HepG2 (cell line): ENCODE measurements at regions of chr13 and their contacts with region 1.

Region 1: DNA sequence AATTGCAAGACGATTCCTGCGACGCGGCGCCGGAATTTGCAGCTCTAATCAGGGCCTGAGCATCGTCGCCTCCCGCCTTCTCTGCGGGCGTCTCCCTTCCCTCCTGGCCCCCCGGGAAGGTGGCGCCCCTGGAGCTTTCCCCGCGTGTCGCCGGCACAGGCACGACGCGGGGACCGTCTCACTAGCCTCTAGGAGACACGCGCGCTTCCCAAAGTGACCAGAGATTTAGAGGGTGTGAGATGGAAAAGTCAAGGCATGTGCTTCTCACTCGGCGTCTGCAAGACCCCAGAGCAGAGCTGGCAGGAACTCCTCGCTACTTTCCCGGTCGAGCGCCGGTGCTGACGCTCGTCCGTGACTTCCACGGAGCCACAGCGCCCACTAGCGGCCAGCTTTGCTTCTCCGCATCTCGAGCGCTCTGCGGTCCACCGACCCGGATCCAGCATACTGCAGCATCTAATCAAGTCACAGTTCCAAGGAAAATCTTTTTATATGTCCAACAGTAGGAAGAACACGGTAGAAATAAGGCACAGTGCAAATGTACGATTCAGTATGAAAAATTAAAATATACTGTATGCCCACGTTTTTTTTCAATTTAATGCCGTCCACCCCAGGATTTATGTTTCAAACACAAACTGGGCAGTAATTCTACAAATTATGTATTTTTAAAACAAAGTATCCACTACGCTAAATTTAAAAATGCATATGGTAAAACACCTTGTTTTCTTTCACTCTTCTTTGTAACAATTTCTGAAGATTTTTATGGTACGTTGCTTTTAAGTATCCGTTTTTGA is 977 bp upstream of the EFNB2 start:
- DNase-seq: peak; percentile 47
- ATAC-seq: peak; percentile 74
- H3K4me3 ChIP-seq: peak overlapping the region; percentile 38 to 75 (median 51)
- H3K27ac ChIP-seq: no peak overlapping the region
- H3K4me1 ChIP-seq: peaks cover 15% of the 10 kb centered on the region
- H3K27me3 ChIP-seq: peaks cover 2 to 16% of the 10 kb centered on the region in 2 experiments; a peak in 2 of 5 replicates
- CTCF ChIP-seq: peak; percentile 95
- EP300 ChIP-seq: no peak
- POLR2A ChIP-seq: no peak
- RAD21 ChIP-seq: peak; percentile 86

Region 2: DNA sequence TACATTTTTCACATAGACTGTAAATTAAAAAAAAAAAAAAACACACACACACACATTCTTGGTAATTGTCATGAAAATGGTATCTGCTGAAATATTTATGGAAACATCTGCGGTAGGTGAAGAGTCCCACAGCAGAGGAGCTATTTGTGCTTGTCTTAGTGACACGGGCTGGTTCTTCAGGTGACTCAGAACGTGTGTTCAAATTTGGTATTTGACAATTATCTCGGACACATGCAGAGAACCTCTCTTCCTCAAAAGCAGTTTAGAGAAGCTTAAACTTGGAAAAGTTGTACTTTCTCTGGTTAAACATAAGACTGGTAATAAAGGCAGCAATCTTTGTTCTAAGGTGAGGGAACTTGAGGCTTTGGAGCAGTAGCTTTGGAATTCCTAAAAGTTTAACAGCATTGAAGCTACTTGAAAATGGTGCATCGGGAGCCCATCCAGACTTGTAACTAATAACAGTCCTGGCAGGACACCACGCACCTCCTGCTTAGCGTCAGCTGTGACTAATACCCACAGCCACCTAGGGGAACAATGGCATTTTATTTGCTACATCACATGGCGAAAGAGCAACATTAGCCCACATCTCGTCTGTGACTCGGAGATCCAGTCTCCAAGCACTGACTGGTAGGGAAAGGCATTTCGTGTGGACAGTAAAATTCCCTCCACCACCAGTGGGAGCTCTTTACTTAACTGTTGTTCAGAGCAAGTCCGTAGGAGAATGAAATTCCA is 1965.1 kb before region 1 on chr13:
- CTCF ChIA-PET with region 1: no interaction called
- POLR2A ChIA-PET with region 1: no interaction called
- in situ Hi-C with region 1: loop called (anchors 25 kb)
- intact Hi-C with region 1: loop called (anchors 10 kb)
- DNase-seq: peak; percentile 16
- ATAC-seq: peak; percentile 89
- H3K4me3 ChIP-seq: no peak overlapping the region
- H3K27ac ChIP-seq: no peak overlapping the region
- H3K4me1 ChIP-seq: no peaks in the 10 kb centered on the region
- H3K27me3 ChIP-seq: no peaks in the 10 kb centered on the region
- CTCF ChIP-seq: peak; percentile 59
- EP300 ChIP-seq: no peak
- POLR2A ChIP-seq: no peak
- RAD21 ChIP-seq: no peak

Region 3: GRCh38 chr13:106083620-106084350 is 452.7 kb before region 1 on chr13:
- CTCF ChIA-PET with region 1: no interaction called
- POLR2A ChIA-PET with region 1: no interaction called
- in situ Hi-C with region 1: no loop called
- intact Hi-C with region 1: loop called (anchors 10 kb)
- DNase-seq: peak; percentile 6
- ATAC-seq: peak; percentile 51
- H3K4me3 ChIP-seq: no peak overlapping the region
- H3K27ac ChIP-seq: no peak overlapping the region
- H3K4me1 ChIP-seq: no peaks in the 10 kb centered on the region
- H3K27me3 ChIP-seq: no peaks in the 10 kb centered on the region
- CTCF ChIP-seq: peak; percentile 28; the same call in 1 of the 2 replicates
- EP300 ChIP-seq: no peak
- POLR2A ChIP-seq: no peak
- RAD21 ChIP-seq: no peak

Region 4: GRCh38 chr13:106493533-106494220 is 42.8 kb before region 1 on chr13:
- CTCF ChIA-PET with region 1: no interaction called
- POLR2A ChIA-PET with region 1: no interaction called
- in situ Hi-C with region 1: no loop called
- intact Hi-C with region 1: no loop called
- DNase-seq: no peak
- ATAC-seq: no peak
- H3K4me3 ChIP-seq: no peak overlapping the region
- H3K27ac ChIP-seq: no peak overlapping the region
- H3K4me1 ChIP-seq: no peaks in the 10 kb centered on the region
- H3K27me3 ChIP-seq: no peaks in the 10 kb centered on the region
- CTCF ChIP-seq: no peak
- EP300 ChIP-seq: no peak
- POLR2A ChIP-seq: no peak
- RAD21 ChIP-seq: no peak

Region 5: DNA sequence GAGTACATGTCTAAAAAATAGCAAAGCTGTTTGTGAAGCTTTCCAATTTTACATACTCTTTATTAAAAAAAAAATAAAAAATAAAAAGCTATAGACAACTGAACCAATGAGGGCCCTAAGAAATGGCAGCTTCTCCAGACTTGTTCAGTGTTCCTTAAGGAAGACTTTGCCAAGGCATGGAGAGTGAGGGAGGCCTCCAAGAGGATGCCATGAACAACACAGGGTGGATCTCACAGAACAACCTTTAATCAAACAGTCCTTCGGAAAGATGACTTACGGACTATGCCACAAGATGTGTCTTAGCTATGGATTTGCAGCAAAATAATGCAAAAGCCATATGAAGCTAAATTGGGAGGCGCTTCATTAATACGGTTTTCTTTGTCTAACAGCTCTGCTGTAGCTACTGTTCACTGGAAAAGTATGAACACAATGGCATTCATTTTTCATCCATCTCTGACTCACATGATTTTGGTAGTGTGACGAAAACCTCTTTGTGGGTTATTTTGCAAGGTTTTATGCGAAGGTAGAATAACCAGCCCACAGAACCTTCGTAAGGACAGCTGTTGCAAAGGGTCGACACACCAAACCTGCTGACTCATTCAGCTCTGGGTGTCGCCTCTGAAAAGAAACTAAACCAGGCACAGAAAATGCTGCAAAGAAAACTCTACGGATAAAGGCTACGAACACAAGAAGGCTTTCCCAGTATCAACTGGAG is 28.7 kb before region 1 on chr13:
- CTCF ChIA-PET with region 1: no interaction called
- POLR2A ChIA-PET with region 1: no interaction called
- in situ Hi-C with region 1: no loop called
- intact Hi-C with region 1: no loop called
- DNase-seq: peak; percentile 1
- ATAC-seq: no peak
- H3K4me3 ChIP-seq: no peak overlapping the region
- H3K27ac ChIP-seq: no peak overlapping the region
- H3K4me1 ChIP-seq: no peaks in the 10 kb centered on the region
- H3K27me3 ChIP-seq: no peaks in the 10 kb centered on the region
- CTCF ChIP-seq: no peak
- EP300 ChIP-seq: no peak
- POLR2A ChIP-seq: no peak
- RAD21 ChIP-seq: no peak

Region 6: GRCh38 chr13:106917673-106918556 is 381.5 kb after region 1 on chr13:
- CTCF ChIA-PET with region 1: no interaction called
- POLR2A ChIA-PET with region 1: no interaction called
- in situ Hi-C with region 1: no loop called
- intact Hi-C with region 1: loop called (anchors 10 kb)
- DNase-seq: no peak
- ATAC-seq: peak; percentile 99
- H3K4me3 ChIP-seq: peak overlapping the region; percentile 53 to 75 (median 62); a peak in 5 of 6 replicates
- H3K27ac ChIP-seq: no peak overlapping the region
- H3K4me1 ChIP-seq: peaks cover 6% of the 10 kb centered on the region; the same call in 1 of the 2 replicates
- H3K27me3 ChIP-seq: peaks cover 0 to 6% of the 10 kb centered on the region in 2 experiments; a peak in 2 of 5 replicates
- CTCF ChIP-seq: peak; percentile 88
- EP300 ChIP-seq: no peak
- POLR2A ChIP-seq: no peak
- RAD21 ChIP-seq: peak; percentile 61

Region 7: DNA sequence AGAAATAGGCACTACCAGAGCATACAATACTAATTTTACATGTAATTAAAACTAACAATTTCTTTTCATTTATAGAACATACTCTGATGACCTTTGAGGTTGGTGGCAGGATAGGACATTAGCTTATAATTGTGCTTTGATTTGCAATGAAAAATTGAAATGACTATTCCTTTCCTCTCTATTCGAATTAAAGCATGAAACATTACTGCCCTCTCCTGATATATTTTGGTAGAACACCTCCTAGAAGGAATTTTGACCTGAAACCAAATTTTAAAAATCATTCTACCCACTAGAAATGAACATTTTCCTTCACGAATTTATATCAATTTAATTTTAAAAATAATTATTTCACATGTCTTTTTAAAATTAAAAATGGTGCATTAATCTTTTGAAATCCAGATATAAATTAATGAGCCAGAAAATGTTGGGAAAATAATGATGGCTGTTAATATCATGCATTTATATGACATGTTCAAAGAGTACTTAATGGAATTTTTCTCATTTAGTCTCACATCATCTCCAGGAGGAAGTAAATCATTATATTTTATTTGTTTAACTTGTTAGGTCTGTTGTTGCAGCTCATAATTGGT is 587.8 kb after region 1 on chr13:
- CTCF ChIA-PET with region 1: interaction called, 4 read pairs
- POLR2A ChIA-PET with region 1: no interaction called
- in situ Hi-C with region 1: loop called (anchors 10 kb)
- intact Hi-C with region 1: loop called (anchors 5 kb)
- DNase-seq: peak; percentile 18
- ATAC-seq: no peak
- H3K4me3 ChIP-seq: no peak overlapping the region
- H3K27ac ChIP-seq: no peak overlapping the region
- H3K4me1 ChIP-seq: peaks cover 34% of the 10 kb centered on the region
- H3K27me3 ChIP-seq: no peaks in the 10 kb centered on the region; a peak in 1 of 5 replicates
- CTCF ChIP-seq: peak; percentile 48
- EP300 ChIP-seq: no peak
- POLR2A ChIP-seq: no peak
- RAD21 ChIP-seq: no peak